ENCODE measurements at regions of chr13 and their contacts with region 1.

Region 1: DNA sequence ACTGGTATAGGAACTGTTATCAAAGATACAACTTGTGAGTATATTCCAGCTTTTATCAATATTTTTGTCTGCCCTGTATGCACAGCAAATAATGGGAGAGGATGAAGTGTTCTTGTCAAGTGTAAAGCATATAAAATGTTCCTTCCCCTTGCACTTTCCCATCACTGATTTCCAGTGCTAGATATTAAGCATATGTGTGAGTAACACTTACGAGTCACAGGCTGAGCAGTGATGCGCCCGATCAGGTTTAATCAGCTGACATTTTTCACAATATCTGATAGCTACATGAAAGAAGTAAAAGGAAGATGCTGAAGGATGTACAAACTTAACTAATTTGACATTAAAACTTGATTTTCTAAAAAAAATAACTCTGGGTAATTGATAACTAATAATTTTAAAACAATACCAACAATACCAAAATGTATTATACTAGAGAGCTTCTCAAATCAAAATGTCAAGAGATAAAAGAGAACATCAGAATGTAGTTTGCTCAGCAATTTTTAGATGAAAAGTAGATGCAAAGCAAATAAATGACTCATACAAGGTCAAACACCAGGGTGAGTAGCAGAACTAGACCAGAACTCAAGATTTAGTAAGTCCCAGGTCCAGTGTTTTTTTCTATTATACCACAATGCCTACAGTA is 56.4 kb downstream of the ZDHHC20 start:
- DNase-seq: no peak
- H3K4me3 Mint-ChIP-seq: no peak overlapping the region
- H3K27ac Mint-ChIP-seq: peak overlapping the region; percentile 59
- H3K4me1 Mint-ChIP-seq: peaks cover 25% of the 10 kb centered on the region
- H3K27me3 Mint-ChIP-seq: no peaks in the 10 kb centered on the region

Region 2: DNA sequence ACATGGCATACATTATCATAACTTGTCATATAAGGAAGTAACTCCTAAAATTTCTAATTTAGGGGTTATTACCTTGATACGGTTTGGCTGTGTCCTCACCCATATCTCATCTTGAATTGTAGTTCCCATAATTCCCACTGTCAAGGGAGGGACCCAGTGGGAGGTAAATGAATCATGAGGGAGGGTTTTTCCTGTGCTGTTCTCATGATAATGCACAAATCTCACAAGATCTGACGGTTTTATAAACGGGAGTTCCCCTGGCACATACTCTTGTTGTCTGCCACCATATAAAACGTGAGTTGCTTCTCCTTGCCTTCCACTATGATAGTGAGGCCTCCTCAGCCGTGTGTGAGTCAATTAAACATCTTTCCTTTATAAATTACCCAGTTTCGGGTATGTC is 19.6 kb before region 1 on chr13:
- intact Hi-C with region 1: no loop called
- DNase-seq: no peak
- H3K4me3 Mint-ChIP-seq: no peak overlapping the region
- H3K27ac Mint-ChIP-seq: no peak overlapping the region
- H3K4me1 Mint-ChIP-seq: no peaks in the 10 kb centered on the region
- H3K27me3 Mint-ChIP-seq: no peaks in the 10 kb centered on the region

Region 3: DNA sequence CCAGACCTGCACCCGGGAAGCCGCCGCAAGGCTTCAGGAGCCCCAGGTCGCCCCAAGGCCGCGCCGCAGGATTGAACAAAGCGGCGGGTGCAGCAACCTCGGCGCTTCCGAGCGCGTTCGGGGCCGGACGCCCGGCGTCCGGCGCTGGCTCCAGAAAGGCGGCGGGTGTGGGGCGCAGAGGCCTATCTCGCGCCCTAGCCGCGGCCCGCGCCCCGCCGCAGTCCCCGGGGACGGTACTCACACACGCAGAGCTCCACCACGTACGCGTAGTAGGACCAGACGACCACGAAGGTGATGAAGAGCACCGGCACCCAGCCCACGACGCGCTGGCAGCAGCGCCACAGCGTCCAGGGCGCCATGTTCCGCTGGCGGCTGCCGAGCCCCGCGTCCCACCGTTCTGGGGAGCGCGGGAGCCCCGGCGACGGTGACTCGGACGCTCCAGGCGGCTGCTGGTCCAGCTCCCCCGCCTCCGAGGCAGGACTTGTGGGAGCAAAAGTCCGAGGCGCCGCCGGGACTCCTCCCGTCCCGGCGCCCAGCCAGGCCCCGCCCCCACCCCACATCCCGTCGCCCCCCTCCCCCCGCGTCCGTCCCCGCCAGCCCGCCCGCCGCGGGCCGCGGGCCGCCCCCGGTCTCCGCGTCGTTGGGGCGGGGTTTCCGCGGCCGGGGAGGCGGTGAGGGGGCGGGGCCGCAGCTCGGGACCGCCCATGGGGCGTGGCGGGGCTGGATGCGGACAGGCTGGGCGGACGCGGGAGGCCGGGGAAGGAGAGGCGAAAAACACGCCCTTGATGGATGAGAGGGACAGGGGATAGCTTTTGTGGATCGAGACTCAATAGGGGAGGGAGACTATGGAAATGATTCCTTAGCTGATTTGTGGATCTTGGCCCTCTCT is 56.4 kb after region 1 on chr13 and contains the start of gene ZDHHC20:
- intact Hi-C with region 1: loop called (anchors 1 kb)
- DNase-seq: peak; percentile 85
- H3K4me3 Mint-ChIP-seq: peak within 1 kb of the TSS; percentile 92
- H3K27ac Mint-ChIP-seq: peak within 1 kb of the TSS; percentile 90
- H3K4me1 Mint-ChIP-seq: peaks cover 27% of the 10 kb centered on the region
- H3K27me3 Mint-ChIP-seq: no peaks in the 10 kb centered on the region
- total RNA-seq, gene ZDHHC20: 59.0 and 63.3 TPM in 2 replicates

Region 4: GRCh38 chr13:21625366-21625765 is 222.7 kb after region 1 on chr13:
- intact Hi-C with region 1: no loop called
- DNase-seq: no peak
- H3K4me3 Mint-ChIP-seq: no peak overlapping the region
- H3K27ac Mint-ChIP-seq: no peak overlapping the region
- H3K4me1 Mint-ChIP-seq: peaks cover 5% of the 10 kb centered on the region
- H3K27me3 Mint-ChIP-seq: peaks cover 12% of the 10 kb centered on the region

Measured in activated T-helper 2 cell treated with anti-CD3 and anti-CD28 coated beads, Interferon-gamma antibody, Interleukin-2, Interleukin-4, amounts not matched to agents 10 μg/mL and 5 μg/mL and 100 μg/mL, durations not matched to agents 14 hours and 24 hours and 36 hours (primary cell).